ENCODE measurements at regions of chr20 and their contacts with region 1.

Region 1: GRCh38 chr20:17682103-17682888 is at the start of gene RRBP1:
- DNase-seq: peak; percentile 99
- H3K4me3 ChIP-seq: peak within 1 kb of the TSS; percentile 92
- H3K4me3 Mint-ChIP-seq: peak within 1 kb of the TSS; percentile 85
- H3K27ac Mint-ChIP-seq: peak within 1 kb of the TSS; percentile 95
- H3K4me1 ChIP-seq: peaks cover 60% of the 10 kb centered on the region
- H3K4me1 Mint-ChIP-seq: peaks cover 68% of the 10 kb centered on the region
- H3K27me3 ChIP-seq: no peaks in the 10 kb centered on the region
- H3K27me3 Mint-ChIP-seq: no peaks in the 10 kb centered on the region
- CTCF ChIP-seq: peak; percentile 82 to 85
- total RNA-seq, gene RRBP1: 665 and 758 TPM in 2 replicates

Region 2: DNA sequence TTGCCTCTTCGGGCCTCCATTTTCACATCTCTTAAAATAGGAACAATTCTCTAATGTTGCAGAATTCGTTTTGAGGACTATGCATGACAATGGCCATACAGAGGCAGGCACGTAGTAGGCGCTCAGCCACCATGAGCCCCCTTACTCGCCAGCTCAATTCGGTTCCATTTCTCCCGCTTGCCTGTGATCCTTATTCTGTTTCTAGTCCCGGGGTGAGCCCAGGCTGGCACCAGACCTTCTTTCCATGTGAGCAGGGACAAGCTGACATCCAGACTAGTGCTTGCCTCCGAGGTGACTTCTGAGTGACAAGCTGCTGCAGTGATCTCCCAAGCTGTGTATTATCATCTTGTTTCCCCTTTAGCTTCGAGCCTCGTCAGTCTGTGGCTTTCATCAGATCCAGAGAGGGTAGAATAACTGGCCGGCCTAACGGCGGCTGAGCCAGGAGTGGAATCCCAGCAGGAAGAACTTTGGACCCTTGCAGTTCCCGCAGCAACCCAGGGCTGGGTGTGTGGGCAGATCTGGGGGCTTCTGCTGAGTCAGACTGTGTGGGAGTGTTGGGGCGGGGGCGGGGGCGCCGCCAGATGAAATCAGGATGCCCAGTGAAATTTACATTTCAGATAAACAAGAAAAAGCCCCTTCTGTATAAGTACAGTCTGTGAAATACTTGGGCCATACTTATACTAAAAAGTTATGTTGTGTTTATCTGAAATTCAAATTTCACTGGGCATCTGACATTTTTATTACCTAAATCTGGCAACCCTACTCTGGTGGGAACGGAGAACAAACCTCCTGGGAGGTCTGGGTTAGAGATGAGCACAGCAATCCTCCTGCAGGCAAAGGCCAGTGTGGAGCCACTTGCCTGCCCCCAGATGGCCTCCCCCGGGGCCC is 28.3 kb after region 1 on chr20:
- CTCF ChIA-PET with region 1: interaction called, 44 read pairs
- POLR2A ChIA-PET with region 1: interaction called, 73 read pairs
- intact Hi-C with region 1: loop called (anchors 1 kb)
- DNase-seq: peak; percentile 76 to 83
- H3K4me3 ChIP-seq: peak overlapping the region; percentile 46
- H3K4me3 Mint-ChIP-seq: peak overlapping the region; percentile 68
- H3K27ac Mint-ChIP-seq: peak overlapping the region; percentile 82
- H3K4me1 ChIP-seq: peaks cover 78% of the 10 kb centered on the region
- H3K4me1 Mint-ChIP-seq: peaks cover 54% of the 10 kb centered on the region
- H3K27me3 ChIP-seq: no peaks in the 10 kb centered on the region
- H3K27me3 Mint-ChIP-seq: no peaks in the 10 kb centered on the region
- CTCF ChIP-seq: no peak

Region 3: DNA sequence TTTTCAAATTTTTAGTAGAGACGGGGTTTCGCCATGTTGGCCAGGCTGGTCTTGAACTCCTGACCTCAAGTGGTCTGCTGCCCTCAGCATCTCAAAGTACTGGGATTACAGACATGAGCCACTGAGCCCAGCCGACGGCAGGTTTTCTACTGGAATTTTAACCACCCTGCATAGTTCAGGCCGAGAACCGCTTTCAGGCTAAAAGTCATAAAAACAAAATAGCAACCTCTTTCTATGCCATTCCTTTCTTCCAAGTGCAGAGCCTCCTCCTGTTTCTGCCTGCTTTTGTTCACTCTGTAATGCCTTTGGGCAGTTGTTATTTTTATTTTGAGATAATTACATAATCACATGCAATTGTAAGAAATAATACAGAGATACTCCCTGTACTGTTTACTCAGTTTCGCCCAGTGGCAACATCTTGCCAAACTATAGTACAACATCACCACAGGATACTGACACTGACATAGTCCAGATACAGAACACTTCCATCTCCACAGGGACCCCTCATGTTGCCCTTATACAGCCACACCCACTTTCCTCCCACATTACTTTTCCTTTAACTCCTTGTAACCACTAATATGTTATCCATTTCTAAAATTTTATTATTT is 77.0 kb after region 1 on chr20:
- CTCF ChIA-PET with region 1: no interaction called
- POLR2A ChIA-PET with region 1: no interaction called
- intact Hi-C with region 1: loop called (anchors 5 kb)
- DNase-seq: no peak
- H3K4me3 ChIP-seq: no peak overlapping the region
- H3K4me3 Mint-ChIP-seq: no peak overlapping the region
- H3K27ac Mint-ChIP-seq: no peak overlapping the region
- H3K4me1 ChIP-seq: peaks cover 14% of the 10 kb centered on the region
- H3K4me1 Mint-ChIP-seq: peaks cover 18% of the 10 kb centered on the region
- H3K27me3 ChIP-seq: no peaks in the 10 kb centered on the region
- H3K27me3 Mint-ChIP-seq: no peaks in the 10 kb centered on the region
- CTCF ChIP-seq: no peak

Region 4: DNA sequence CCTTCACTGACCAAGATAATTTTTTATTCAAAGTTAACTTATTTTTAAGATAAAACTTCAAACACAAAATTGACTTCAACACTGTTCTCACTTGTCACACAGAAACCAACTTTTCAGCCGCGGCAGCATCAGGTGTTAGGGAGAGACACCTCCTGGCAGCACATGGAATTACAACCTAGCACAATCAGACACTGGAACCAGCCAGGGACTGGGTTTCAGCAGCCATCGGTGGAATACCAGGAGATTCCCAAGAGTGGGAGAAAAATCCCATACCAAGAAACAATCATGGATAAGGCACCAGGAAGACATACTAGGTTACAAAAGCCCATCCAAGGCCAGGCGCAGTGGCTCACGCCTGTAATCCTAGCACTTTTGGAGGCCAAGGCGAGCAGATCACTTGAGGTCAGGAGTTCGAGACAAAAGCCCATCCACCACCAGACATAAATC is 216.3 kb after region 1 on chr20:
- CTCF ChIA-PET with region 1: interaction called, 8 read pairs
- POLR2A ChIA-PET with region 1: interaction called, 3 read pairs
- intact Hi-C with region 1: loop called (anchors 1 kb)
- DNase-seq: peak; percentile 71 to 81
- H3K4me3 ChIP-seq: no peak overlapping the region
- H3K4me3 Mint-ChIP-seq: no peak overlapping the region
- H3K27ac Mint-ChIP-seq: peak overlapping the region; percentile 29
- H3K4me1 ChIP-seq: peaks cover 4% of the 10 kb centered on the region; the same call in 1 of the 2 replicates
- H3K4me1 Mint-ChIP-seq: peaks cover 4% of the 10 kb centered on the region
- H3K27me3 ChIP-seq: no peaks in the 10 kb centered on the region
- H3K27me3 Mint-ChIP-seq: no peaks in the 10 kb centered on the region
- CTCF ChIP-seq: peak; percentile 85 to 97

Region 5: DNA sequence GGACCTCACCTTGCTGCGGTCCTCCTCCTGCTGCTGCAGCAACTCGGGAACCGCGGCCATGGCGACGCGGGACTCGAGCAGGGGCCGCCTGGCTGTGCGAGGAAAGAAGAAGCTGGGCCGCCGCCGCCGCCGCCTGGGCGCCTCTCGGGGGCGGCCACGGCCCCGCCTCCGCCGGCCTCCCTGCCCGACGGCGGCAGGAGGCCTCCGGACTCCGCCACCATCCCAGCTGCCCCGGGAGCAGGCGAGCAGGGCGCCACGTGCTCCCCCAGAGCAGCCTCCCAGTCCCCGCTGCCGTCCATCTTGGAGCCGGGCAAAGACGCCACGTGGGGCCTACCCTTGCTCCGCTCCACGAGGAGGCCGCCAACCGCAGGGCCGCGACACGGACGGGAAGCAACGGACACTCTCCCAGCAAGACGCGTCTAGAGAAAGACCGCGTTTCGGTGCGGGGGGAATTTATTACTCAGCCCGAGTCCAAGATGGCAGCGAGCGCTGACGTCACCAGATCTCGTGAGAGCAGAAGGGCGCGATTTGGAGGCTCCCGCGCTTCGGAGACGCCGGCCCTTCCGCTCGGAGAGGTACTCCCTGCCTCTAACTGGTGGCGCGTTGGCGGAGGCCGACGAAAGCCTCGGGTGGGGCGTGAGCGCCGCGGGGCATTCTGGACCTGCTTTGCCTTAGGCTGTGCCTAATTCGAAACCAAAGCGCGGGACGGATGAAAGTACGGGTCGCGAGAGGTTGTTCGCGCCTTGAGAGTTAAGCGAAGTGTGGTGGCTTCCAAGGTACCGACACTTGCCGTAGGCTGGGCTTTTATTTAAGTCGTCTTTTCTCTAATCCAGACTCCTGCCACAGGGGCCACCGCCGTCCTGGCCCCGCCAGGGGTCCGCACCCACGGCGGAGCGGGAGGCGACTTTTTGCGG is 286.3 kb after region 1 on chr20 and contains the starts of genes MGME1 and SNX5:
- CTCF ChIA-PET with region 1: no interaction called
- POLR2A ChIA-PET with region 1: no interaction called
- intact Hi-C with region 1: loop called (anchors 1 kb)
- DNase-seq: peak; percentile 100
- H3K4me3 ChIP-seq: peak within 1 kb of the TSS; percentile 72
- H3K4me3 Mint-ChIP-seq: peak within 1 kb of the TSS; percentile 93
- H3K27ac Mint-ChIP-seq: peak within 1 kb of the TSS; percentile 99
- H3K4me1 ChIP-seq: peaks cover 51% of the 10 kb centered on the region
- H3K4me1 Mint-ChIP-seq: peaks cover 24% of the 10 kb centered on the region
- H3K27me3 ChIP-seq: no peaks in the 10 kb centered on the region
- H3K27me3 Mint-ChIP-seq: no peaks in the 10 kb centered on the region
- CTCF ChIP-seq: no peak
- total RNA-seq, gene MGME1: 44.3 and 50.5 TPM in 2 replicates
- total RNA-seq, gene SNX5: 275 and 299 TPM in 2 replicates